Left colon (tissue), 2 donors: ENCODE measurements at regions of chr9 and their contacts with region 1.

Region 1: GRCh38 chr9:36407122-36407723 is 7.2 kb upstream of the RNF38 start:
- DNase-seq: peak; percentile 35 to 58
- ATAC-seq: peak; percentile 91

Region 2: DNA sequence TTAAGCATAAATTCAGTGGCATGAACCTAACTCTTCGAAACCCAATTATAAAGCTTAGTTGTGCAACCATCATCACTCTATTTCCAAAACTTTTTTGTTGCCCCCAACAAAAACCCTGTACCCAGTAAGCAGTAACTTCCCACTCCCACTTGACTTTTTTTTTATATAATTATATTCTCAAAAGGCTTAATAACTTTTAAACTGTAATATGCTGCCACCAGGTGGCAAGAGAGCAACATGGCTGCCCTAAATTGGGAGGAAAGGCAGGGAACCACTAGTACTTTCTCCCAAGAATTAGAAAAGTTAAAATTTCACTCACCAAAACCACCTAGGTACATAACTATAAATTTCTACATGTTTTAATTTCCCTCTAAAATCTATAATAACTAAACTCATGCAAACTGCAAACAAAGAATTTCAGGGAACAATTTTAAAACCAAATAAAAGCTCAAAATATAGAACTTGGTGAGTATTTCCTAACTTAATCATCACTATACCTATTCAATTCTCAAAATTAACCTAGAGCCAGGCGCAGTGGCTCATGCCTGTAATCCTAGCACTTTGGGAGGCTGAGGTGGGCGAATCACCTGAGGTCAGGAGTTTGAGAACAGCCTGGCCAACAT is 43.0 kb after region 1 on chr9:
- intact Hi-C with region 1: loop called in 1 of 2 experiments (anchors 5 kb)
- DNase-seq: no peak
- ATAC-seq: peak; percentile 48

Region 3: GRCh38 chr9:36560857-36561221 is 153.6 kb after region 1 on chr9:
- intact Hi-C with region 1: loop called in 1 of 2 experiments (anchors 5 kb)
- DNase-seq: no peak
- ATAC-seq: no peak